Heart left ventricle (tissue), 16 donors: ENCODE measurements at regions of chr1 and their contacts with region 1.

Region 1: DNA sequence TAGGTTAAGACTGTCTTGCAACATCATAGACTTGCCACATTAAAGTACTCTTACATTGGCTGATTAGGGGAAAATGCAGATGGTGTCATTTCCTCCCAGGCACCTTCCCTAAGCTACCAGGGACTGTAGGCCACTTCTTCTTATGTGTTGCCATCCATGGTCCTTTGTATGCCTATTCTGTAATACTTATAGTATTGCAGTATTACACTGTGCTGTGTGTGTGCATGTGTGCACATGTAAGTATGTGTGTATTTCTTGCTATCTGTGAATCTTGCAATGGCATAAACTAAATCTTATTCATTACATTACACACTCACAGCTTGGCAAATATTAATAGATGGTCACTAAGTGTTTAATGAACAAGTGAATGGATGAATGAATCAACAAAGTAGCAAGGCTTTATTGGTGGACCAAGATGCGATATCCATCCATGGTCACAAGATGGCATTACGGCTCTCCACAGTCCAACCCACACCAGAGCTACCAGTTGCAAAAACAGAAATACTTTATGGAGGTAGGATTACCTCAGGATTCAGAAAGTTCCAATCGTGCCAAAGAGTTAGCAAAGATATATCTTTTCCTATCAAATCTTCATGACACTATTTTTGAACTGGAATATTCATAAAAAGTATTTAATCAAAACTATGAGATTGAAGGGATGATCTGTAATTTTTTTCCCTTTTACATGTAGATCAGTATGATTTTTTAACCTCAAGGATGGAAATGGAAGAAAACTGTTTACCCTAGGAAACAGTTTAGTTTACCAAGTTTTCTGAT is 160.2 kb downstream of the DENND1B start:
- DNase-seq: no peak
- ATAC-seq: peak in 3 of 4 donors; percentile 73 to 84 (median 81)
- H3K4me3 ChIP-seq: no peak overlapping the region
- H3K27ac ChIP-seq: no peak overlapping the region
- H3K4me1 ChIP-seq: peaks cover 0 to 15% (median 3%) of the 10 kb centered on the region in 12 donors
- H3K27me3 ChIP-seq: no peaks in the 10 kb centered on the region
- CTCF ChIP-seq: peak; percentile 45 to 69 (median 58)
- POLR2A ChIP-seq: no peak

Region 2: DNA sequence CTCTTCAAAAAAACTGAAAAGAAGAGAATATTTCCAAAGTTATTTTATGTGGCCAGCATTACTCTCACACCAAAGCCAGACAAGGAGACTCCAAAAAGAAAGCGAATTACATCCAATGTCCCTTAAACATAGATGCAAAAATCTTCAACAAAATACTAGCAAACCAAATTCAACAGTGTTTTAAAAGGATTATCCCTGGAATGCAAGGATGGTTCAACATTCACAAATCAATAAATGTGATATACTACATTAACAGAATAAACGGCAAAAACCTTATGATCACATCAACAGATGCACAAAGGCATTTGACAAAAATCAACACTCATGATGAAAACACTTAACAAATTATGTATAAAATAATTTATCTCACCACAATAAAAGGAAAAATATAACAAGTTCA is 47.7 kb before region 1 on chr1:
- intact Hi-C with region 1: no loop called
- DNase-seq: no peak
- ATAC-seq: no peak
- H3K4me3 ChIP-seq: no peak overlapping the region
- H3K27ac ChIP-seq: no peak overlapping the region
- H3K4me1 ChIP-seq: no peaks in the 10 kb centered on the region
- H3K27me3 ChIP-seq: no peaks in the 10 kb centered on the region
- CTCF ChIP-seq: no peak
- POLR2A ChIP-seq: no peak

Region 3: DNA sequence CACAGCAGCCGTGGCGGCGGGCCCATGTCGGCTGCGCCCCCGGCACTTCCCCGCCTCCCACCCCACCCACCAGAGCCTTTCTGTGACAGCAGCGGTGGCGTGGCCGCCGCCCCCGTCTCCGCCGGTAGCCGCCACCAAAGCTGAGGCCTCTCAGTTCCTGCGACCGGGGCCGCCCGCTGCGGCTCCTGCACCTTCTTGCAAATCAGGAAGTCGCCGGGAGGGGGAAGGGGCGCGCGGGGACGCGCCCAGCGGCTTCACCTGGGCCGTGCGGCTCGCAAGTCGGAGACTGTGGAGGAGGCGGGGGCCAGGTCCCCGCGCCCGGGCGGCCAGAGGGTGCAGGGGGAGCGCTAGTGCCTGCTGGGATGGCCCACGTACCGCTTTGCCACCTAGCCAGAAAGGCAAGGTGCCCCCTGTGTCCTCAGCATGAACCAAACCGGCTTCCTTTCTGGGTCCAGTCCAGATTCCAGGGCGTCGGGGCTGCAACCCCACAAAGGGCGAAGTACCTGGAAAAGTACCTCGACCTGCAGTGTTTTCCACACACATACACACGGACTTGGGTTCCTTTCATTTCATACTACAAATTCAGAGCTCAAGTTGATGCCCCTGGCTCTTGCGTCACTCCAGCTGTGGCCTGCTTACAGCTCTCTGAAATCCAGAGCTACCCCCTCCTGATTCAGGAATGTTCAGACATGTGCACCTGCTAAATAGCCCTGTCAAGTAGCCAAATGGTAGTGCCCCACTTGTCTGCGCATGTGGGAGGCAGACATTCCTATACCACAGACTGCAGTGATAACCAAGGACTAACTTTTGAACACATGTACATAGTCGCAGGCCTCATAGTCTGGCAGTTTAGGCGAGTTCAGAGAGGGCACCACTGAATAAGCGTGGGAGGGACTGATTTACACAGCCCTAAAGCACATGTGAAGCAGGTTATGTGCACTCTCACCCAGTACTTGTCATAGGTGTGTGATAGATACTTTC is 160.5 kb after region 1 on chr1 and contains the start of gene DENND1B:
- intact Hi-C with region 1: loop called in 1 of 10 experiments (anchors 10 kb)
- DNase-seq: peak; percentile 68 to 90 (median 82)
- ATAC-seq: peak; percentile 69 to 84 (median 80)
- H3K4me3 ChIP-seq: peak within 1 kb of the TSS; percentile 65 to 87 (median 76)
- H3K27ac ChIP-seq: peak within 1 kb of the TSS; percentile 75 to 95 (median 91)
- H3K4me1 ChIP-seq: peaks cover 0 to 75% (median 35%) of the 10 kb centered on the region in 12 donors
- H3K27me3 ChIP-seq: no peaks in the 10 kb centered on the region
- CTCF ChIP-seq: peak in 1 of 12 donors; percentile 22
- POLR2A ChIP-seq: peak in 1 of 2 donors; percentile 14
- total RNA-seq, gene DENND1B: 16.0 to 31.4 (median 24.0) TPM

Region 4: DNA sequence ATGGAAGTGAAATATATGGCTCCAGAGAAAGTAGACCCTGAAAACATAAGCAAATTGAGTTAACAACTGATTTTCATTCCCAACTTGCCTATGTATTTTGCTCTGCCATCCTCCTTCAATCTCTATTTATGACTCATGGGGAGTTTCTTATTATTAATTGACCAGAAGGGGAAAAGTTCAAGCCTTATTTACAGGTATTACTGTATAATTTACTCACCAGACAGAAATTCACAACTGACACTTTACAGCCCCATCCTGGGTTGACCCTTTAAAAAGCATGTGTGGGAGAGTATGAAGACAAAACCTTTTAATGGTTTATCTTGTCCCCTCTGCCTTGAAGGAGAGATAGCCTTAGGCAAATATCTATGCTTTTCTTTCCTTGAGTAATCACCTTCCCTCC is 247.6 kb after region 1 on chr1:
- intact Hi-C with region 1: loop called in 5 of 10 experiments (anchors 5 kb)
- DNase-seq: no peak
- ATAC-seq: no peak
- H3K4me3 ChIP-seq: no peak overlapping the region
- H3K27ac ChIP-seq: no peak overlapping the region
- H3K4me1 ChIP-seq: no peaks in the 10 kb centered on the region
- H3K27me3 ChIP-seq: no peaks in the 10 kb centered on the region
- CTCF ChIP-seq: no peak
- POLR2A ChIP-seq: no peak

Region 5: DNA sequence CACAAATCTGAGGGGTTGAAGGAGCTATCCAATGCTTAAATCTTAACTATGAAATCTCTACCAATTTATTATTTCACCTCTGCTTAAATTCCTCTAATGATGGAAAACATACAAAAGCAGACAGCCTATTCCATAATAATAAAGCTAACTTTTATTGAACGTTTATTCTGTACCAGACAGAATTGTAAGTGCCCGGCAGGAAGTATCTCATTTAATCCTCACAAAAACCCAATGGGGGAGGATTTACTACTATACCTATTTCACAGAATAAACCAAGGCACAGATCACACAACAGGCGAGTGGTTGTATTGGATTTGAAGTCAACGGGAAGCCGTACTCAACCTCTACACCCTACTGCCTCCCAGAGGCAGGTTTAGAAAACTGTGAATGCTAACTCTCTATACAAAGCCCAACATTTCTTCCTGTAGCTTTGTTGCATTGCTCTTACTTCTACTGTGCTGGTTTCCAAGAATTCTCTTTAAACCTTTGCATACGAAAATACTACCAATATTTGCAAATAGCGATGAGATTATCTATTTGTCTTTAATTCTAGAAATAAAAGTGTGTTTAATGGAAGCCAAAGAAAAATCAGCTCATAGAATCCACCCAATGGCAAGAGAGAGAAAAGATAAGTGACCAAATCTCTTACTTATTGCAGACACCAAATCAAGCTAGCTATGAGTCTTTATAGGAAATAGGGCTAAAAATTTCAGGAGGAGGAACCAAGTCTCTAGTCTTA is 253.8 kb after region 1 on chr1:
- intact Hi-C with region 1: loop called (anchors 1 to 5 kb)
- DNase-seq: peak in 1 of 5 donors; percentile 13
- ATAC-seq: peak; percentile 51 to 89 (median 86)
- H3K4me3 ChIP-seq: no peak overlapping the region
- H3K27ac ChIP-seq: no peak overlapping the region
- H3K4me1 ChIP-seq: no peaks in the 10 kb centered on the region
- H3K27me3 ChIP-seq: no peaks in the 10 kb centered on the region
- CTCF ChIP-seq: peak; percentile 41 to 73 (median 61)
- POLR2A ChIP-seq: no peak

Region 6: DNA sequence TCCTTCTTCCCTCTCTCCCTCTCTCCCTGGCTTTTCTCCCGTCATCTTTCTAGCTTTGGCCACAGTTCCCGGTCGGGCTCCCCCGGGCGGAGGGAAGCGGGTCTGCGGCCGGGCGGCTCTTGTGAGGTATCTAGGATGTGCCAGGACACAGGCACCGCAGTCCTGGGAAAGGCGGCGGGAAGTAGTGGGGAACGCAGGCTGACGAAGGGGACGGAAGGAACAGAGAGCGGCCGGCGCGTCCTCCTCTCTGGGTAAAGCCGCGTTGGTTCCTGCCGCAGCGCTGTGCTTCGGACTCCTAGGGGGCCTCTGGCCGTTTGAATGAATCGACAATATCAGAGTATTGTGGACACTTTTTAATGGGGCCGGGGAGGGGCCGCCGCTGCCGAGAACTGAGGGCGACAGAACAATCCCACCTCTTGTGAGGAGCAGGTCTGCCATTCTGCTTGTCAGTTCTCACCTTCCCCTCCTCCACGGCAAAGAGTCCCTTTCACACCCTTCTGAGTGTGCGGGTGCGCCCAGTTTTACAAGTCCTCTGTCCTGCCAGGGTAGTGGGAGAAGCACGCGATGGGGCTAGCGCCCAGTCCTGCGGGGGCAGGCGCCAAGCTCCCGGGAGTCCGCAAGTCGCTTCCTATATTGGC is 300.9 kb after region 1 on chr1:
- intact Hi-C with region 1: loop called in 7 of 10 experiments (anchors 2 to 5 kb)
- DNase-seq: peak in 4 of 5 donors; percentile 48 to 69 (median 65)
- ATAC-seq: peak in 3 of 4 donors; percentile 61 to 67 (median 63)
- H3K4me3 ChIP-seq: peak overlapping the region; percentile 1 to 52 (median 35)
- H3K27ac ChIP-seq: no peak overlapping the region
- H3K4me1 ChIP-seq: peaks cover 0 to 75% (median 55%) of the 10 kb centered on the region in 12 donors
- H3K27me3 ChIP-seq: peaks cover 69 to 100% (median 100%) of the 10 kb centered on the region in 9 donors
- CTCF ChIP-seq: peak in 11 of 12 donors; percentile 21 to 57 (median 34)
- POLR2A ChIP-seq: no peak

Region 7: DNA sequence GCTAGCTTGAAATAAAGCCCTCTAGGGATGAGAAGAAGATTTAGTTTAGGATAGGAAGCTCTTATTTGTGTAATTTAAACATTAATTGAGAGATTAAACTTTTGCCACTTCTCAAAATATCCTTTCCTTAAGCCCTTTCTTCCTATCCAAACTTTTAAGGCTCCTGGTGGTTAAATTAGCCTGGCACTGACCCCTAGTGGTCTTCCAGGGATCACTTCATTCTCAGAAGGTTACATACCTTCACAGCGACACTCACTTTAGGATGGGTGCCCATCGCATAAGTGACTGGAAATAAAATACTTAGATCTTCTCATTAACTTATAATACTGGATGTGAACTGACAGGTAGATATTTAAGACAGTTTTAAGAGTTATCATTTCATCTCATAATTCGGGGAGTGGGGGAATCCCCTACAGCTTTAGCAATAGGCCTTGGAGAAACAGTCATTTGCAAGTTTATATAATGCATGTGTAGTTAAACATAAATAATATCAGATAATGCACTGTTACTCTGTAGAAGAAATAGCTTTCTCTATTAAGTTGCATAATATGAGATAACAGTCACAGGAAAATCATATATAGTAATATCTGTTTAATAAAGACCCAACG is 309.5 kb after region 1 on chr1:
- intact Hi-C with region 1: loop called in 9 of 10 experiments (anchors 2 to 5 kb)
- DNase-seq: no peak
- ATAC-seq: peak in 3 of 4 donors; percentile 61 to 73 (median 66)
- H3K4me3 ChIP-seq: no peak overlapping the region
- H3K27ac ChIP-seq: no peak overlapping the region
- H3K4me1 ChIP-seq: peaks cover 0 to 8% (median under 1%) of the 10 kb centered on the region in 12 donors
- H3K27me3 ChIP-seq: peaks cover 17 to 84% (median 47%) of the 10 kb centered on the region in 9 donors
- CTCF ChIP-seq: peak; percentile 52 to 77 (median 66)
- POLR2A ChIP-seq: no peak